CD4-positive, alpha-beta memory T cell (primary cell): ENCODE measurements at regions of chr19 and their contacts with region 1.

Region 1: GRCh38 chr19:41353466-41354342 is at the start of gene TGFB1:
- DNase-seq: peak; percentile 93 to 95 (median 94)
- H3K4me3 ChIP-seq: peak within 1 kb of the TSS; percentile 68 to 88
- H3K4me3 Mint-ChIP-seq: peak within 1 kb of the TSS; percentile 90 to 100 (median 99)
- H3K27ac ChIP-seq: peak within 1 kb of the TSS; percentile 91
- H3K27ac Mint-ChIP-seq: peak within 1 kb of the TSS; percentile 89 to 99 (median 98)
- H3K4me1 ChIP-seq: peaks cover 68% of the 10 kb centered on the region
- H3K4me1 Mint-ChIP-seq: peaks cover 51 to 73% (median 61%) of the 10 kb centered on the region in 4 donors
- H3K27me3 ChIP-seq: no peaks in the 10 kb centered on the region
- H3K27me3 Mint-ChIP-seq: no peaks in the 10 kb centered on the region
- total RNA-seq, gene TGFB1: 136 to 143 TPM

Region 2: GRCh38 chr19:41298348-41298964 is 55.2 kb before region 1 on chr19:
- CTCF ChIA-PET with region 1: interaction called, 10 read pairs
- POLR2A ChIA-PET with region 1: interaction called, 273 read pairs
- intact Hi-C with region 1: no loop called
- DNase-seq: peak; percentile 47 to 80 (median 56)
- H3K4me3 ChIP-seq: no peak overlapping the region
- H3K4me3 Mint-ChIP-seq: peak overlapping the region in 7 of 8 donors; percentile 59 to 85 (median 70)
- H3K27ac ChIP-seq: peak overlapping the region; percentile 76
- H3K27ac Mint-ChIP-seq: peak overlapping the region; percentile 95 to 100 (median 99)
- H3K4me1 ChIP-seq: peaks cover 85% of the 10 kb centered on the region
- H3K4me1 Mint-ChIP-seq: peaks cover 72 to 92% (median 82%) of the 10 kb centered on the region in 4 donors
- H3K27me3 ChIP-seq: no peaks in the 10 kb centered on the region
- H3K27me3 Mint-ChIP-seq: no peaks in the 10 kb centered on the region

Region 3: DNA sequence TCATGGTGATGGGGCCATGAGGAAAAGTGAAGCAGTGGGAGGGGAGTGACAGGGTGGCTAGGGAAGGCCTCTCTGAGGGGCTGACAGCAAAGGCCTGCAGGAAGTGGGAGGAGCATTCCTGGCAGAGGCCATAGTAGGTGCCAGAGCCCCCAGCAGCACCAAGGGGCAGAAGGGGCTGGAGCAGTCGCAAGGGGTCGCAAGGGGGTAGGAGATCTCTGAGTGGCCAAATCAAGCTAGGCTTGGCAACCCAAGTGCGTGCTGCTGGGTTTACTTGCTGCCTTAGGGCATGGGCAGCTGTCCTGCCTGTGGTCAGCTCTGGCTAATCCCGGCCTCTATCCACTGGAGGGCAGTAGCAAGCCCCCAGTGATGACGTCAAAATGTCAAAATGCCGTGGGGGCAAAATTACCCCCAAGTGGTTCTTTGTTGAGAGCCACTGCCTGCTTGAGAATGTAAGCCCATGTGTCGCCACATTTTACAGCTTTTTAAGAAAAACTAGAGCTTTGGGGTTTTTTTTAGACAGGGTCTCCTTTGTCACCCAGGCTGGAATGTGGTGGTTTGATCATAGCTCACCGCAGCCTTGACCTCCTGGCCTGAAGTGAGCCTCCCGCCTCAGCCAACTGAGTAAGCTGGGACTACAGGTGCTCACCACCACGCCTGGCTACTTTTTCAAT is 32.0 kb before region 1 on chr19:
- CTCF ChIA-PET with region 1: interaction called, 16 read pairs
- POLR2A ChIA-PET with region 1: interaction called, 136 read pairs
- intact Hi-C with region 1: no loop called
- DNase-seq: peak in 1 of 5 donors; percentile 35
- H3K4me3 ChIP-seq: no peak overlapping the region
- H3K4me3 Mint-ChIP-seq: peak overlapping the region in 1 of 8 donors; percentile 29
- H3K27ac ChIP-seq: no peak overlapping the region
- H3K27ac Mint-ChIP-seq: peak overlapping the region in 4 of 7 donors; percentile 10 to 87 (median 37)
- H3K4me1 ChIP-seq: peaks cover 15% of the 10 kb centered on the region
- H3K4me1 Mint-ChIP-seq: peaks cover 17 to 76% (median 29%) of the 10 kb centered on the region in 4 donors
- H3K27me3 ChIP-seq: no peaks in the 10 kb centered on the region
- H3K27me3 Mint-ChIP-seq: no peaks in the 10 kb centered on the region

Region 4: DNA sequence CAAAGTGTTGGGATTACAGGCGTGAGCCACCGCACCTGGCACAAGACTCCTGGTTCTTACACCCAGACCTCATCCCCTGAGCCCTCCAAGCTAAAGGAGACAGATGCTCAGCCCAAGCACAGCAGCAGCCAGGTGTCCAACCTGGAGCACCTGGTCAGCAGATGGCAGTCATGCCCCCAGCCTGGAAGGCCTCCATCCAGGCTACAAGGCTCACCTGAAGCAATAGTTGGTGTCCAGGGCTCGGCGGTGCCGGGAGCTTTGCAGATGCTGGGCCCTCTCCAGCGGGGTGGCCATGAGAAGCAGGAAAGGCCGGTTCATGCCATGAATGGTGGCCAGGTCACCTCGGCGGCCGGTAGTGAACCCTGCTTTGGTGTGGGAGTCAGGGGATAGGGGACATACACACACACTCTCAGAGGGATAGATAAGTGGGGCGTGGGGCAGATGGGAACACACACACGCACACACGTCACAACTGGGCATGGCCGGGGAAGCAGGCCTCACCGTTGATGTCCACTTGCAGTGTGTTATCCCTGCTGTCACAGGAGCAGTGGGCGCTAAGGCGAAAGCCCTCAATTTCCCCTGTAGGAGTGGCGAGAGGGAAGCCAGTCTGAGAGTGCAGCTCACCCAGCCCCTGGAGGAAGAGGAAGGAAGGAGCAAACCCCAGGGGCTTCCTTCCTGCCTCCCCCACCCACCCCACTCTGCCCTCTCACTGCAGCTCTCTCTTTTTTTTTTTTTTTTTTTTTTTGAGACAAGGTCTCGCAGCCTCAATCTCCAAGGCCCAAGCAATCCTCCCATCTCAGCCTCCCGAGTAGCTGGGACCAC is 11.8 kb before region 1 on chr19:
- CTCF ChIA-PET with region 1: interaction called, 19 read pairs
- POLR2A ChIA-PET with region 1: interaction called, 25 read pairs
- intact Hi-C with region 1: loop called (anchors 1 kb)
- DNase-seq: no peak
- H3K4me3 ChIP-seq: no peak overlapping the region
- H3K4me3 Mint-ChIP-seq: peak overlapping the region; percentile 36 to 79 (median 62)
- H3K27ac ChIP-seq: peak overlapping the region; percentile 7
- H3K27ac Mint-ChIP-seq: peak overlapping the region; percentile 48 to 84 (median 59)
- H3K4me1 ChIP-seq: peaks cover 50% of the 10 kb centered on the region
- H3K4me1 Mint-ChIP-seq: peaks cover 29 to 73% (median 47%) of the 10 kb centered on the region in 4 donors
- H3K27me3 ChIP-seq: no peaks in the 10 kb centered on the region
- H3K27me3 Mint-ChIP-seq: no peaks in the 10 kb centered on the region

Region 5: GRCh38 chr19:41426952-41427646 is 73.4 kb after region 1 on chr19 and contains the start of gene B3GNT8:
- CTCF ChIA-PET with region 1: interaction called, 3 read pairs
- POLR2A ChIA-PET with region 1: interaction called, 12 read pairs
- intact Hi-C with region 1: no loop called
- DNase-seq: peak; percentile 16 to 52 (median 32)
- H3K4me3 ChIP-seq: peak within 1 kb of the TSS; percentile 33 to 34
- H3K4me3 Mint-ChIP-seq: peak within 1 kb of the TSS; percentile 90 to 98 (median 92)
- H3K27ac ChIP-seq: peak within 1 kb of the TSS; percentile 68
- H3K27ac Mint-ChIP-seq: peak within 1 kb of the TSS; percentile 91 to 98 (median 96)
- H3K4me1 ChIP-seq: peaks cover 39% of the 10 kb centered on the region
- H3K4me1 Mint-ChIP-seq: peaks cover 15 to 51% (median 34%) of the 10 kb centered on the region in 4 donors
- H3K27me3 ChIP-seq: no peaks in the 10 kb centered on the region
- H3K27me3 Mint-ChIP-seq: no peaks in the 10 kb centered on the region
- total RNA-seq, gene B3GNT8: 2.9 to 3.2 TPM

Region 6: DNA sequence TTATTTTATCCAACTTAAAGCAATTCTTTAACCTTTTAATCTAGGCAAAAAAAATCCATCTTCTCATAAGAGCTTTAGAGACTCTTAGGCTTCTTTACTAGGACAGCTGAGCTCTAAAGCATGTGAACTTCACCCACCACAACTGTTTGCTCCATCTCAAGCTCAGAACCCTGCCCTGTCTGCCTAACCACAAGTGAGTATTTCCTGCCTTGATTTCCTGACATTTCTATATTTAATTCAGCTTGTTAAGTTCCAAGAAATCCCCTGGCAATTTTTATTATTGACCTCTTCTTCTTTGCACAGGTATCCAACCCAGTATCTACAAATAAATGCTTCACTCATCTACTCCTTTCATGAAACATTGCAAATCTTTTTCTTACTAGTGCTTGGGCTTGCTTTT is 201.2 kb after region 1 on chr19:
- CTCF ChIA-PET with region 1: no interaction called
- POLR2A ChIA-PET with region 1: interaction called, 28 read pairs
- intact Hi-C with region 1: loop called (anchors 5 kb)
- DNase-seq: peak; percentile 64 to 78 (median 66)
- H3K4me3 ChIP-seq: peak overlapping the region in 1 of 2 donors; percentile 37
- H3K4me3 Mint-ChIP-seq: peak overlapping the region; percentile 56 to 100 (median 98)
- H3K27ac ChIP-seq: peak overlapping the region; percentile 63
- H3K27ac Mint-ChIP-seq: peak overlapping the region; percentile 66 to 95 (median 88)
- H3K4me1 ChIP-seq: peaks cover 72% of the 10 kb centered on the region
- H3K4me1 Mint-ChIP-seq: peaks cover 45 to 84% (median 62%) of the 10 kb centered on the region in 4 donors
- H3K27me3 ChIP-seq: no peaks in the 10 kb centered on the region
- H3K27me3 Mint-ChIP-seq: no peaks in the 10 kb centered on the region